A549 (cell line): ENCODE measurements at regions of chr6 and their contacts with region 1.

Region 1: GRCh38 chr6:7249946-7250643 is 62.9 kb downstream of the SSR1 start:
- DNase-seq: no peak
- ATAC-seq: no peak
- H3K4me3 ChIP-seq: no peak overlapping the region
- H3K27ac ChIP-seq: no peak overlapping the region
- H3K4me1 ChIP-seq: no peaks in the 10 kb centered on the region
- CTCF ChIP-seq: no peak
- EP300 ChIP-seq: no peak
- POLR2A ChIP-seq: no peak
- RAD21 ChIP-seq: no peak

Region 2: GRCh38 chr6:6724539-6725467 is 525.3 kb before region 1 on chr6:
- CTCF ChIA-PET with region 1: interaction called, 43 read pairs
- POLR2A ChIA-PET with region 1: no interaction called
- DNase-seq: peak; percentile 44
- ATAC-seq: peak; percentile 78 to 94; a peak in 5 of 6 replicates
- H3K4me3 ChIP-seq: 0 out of 3 replicates have a peak overlapping the region, but pooled peaks have one; percentile 9
- H3K27ac ChIP-seq: peak overlapping the region; percentile 63 to 79; a peak in 5 of 6 replicates
- H3K4me1 ChIP-seq: peaks cover 8% of the 10 kb centered on the region
- CTCF ChIP-seq: peak; percentile 65
- EP300 ChIP-seq: no peak
- POLR2A ChIP-seq: no peak
- RAD21 ChIP-seq: peak; percentile 81 to 82